MCF 10A (cell line): ENCODE measurements at regions of chr18 and their contacts with region 1.

Region 1: DNA sequence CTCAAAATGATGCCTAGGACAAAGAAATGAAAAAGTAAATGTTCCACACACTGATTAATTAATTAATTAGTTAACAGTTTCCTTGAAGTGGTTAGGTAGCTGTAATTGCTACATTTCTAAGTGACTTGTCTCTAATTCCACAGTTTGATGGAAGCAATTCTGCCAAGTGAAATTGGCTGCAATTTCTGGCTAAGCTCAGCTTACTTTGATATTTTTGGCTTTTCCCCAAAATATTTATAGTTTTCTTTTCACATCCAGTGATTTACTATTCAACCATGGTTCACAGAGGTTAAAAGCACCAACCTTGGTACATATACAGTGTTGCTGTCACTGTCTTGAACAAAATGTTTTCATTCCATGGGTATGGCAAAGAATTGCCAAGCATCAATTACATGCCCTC is 459.5 kb upstream of the CDH20 start:
- DNase-seq: no peak
- H3K4me3 Mint-ChIP-seq: no peak overlapping the region
- H3K27ac Mint-ChIP-seq: peak overlapping the region; percentile 29
- H3K4me1 Mint-ChIP-seq: peaks cover 26% of the 10 kb centered on the region
- H3K27me3 Mint-ChIP-seq: no peaks in the 10 kb centered on the region
- CTCF ChIP-seq: no peak

Region 2: DNA sequence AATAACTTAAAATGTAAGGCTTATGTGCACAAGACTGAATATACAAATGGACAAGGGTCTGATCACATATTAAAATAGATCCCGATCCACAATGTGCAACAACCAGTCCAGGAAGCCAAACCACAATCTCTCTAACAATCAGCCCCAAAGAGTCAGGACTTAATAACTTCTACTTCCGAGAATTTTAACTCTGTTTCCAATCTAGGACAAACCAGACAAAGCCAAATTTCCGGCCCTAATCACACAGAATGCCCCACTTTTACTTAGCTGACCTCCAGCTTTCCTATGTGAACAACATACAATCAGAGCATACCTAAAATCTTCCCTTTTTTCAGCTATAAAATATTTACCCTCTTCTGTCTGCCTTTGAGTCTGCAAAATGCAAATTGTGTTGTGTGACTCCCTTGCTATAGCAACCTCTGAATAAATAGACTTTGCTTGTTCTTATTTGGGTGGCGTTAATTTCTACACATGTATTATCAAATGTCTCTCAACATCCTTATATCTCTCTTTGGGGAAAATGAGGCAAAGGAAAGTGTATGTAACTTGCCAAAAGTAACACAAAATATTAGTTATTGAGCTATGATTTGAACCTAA is 119.2 kb before region 1 on chr18:
- CTCF ChIA-PET with region 1: no interaction called
- POLR2A ChIA-PET with region 1: no interaction called
- intact Hi-C with region 1: no loop called
- DNase-seq: no peak
- H3K4me3 Mint-ChIP-seq: no peak overlapping the region
- H3K27ac Mint-ChIP-seq: no peak overlapping the region
- H3K4me1 Mint-ChIP-seq: no peaks in the 10 kb centered on the region
- H3K27me3 Mint-ChIP-seq: peaks cover 83% of the 10 kb centered on the region
- CTCF ChIP-seq: no peak

Region 3: GRCh38 chr18:60861575-60861974 is 12.1 kb before region 1 on chr18:
- CTCF ChIA-PET with region 1: no interaction called
- POLR2A ChIA-PET with region 1: interaction called, 10 read pairs
- intact Hi-C with region 1: no loop called
- DNase-seq: peak; percentile 24
- H3K4me3 Mint-ChIP-seq: no peak overlapping the region
- H3K27ac Mint-ChIP-seq: no peak overlapping the region
- H3K4me1 Mint-ChIP-seq: peaks cover 12% of the 10 kb centered on the region
- H3K27me3 Mint-ChIP-seq: no peaks in the 10 kb centered on the region
- CTCF ChIP-seq: no peak

Region 4: DNA sequence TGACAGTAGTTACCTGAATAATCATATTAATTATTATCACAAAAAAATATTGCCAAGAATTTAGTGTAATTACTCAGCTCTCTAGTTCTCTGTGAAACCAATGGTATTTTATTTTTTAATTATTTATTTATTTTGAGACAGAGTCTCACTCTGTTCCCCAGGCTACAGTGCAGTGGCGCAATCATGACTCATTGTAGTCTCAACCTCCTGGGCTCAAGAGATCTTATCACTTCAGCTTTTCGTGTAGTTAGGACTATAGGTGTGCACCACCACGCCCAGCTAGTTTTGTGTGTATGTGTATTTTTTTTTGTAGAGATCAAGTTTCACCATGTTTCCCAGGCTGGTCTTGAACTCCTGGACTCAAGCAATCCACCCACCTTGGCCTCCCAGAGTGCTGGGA is 19.1 kb after region 1 on chr18:
- CTCF ChIA-PET with region 1: interaction called, 3 read pairs
- POLR2A ChIA-PET with region 1: interaction called, 15 read pairs
- intact Hi-C with region 1: no loop called
- DNase-seq: peak; percentile 97
- H3K4me3 Mint-ChIP-seq: peak overlapping the region; percentile 33
- H3K27ac Mint-ChIP-seq: peak overlapping the region; percentile 94
- H3K4me1 Mint-ChIP-seq: peaks cover 34% of the 10 kb centered on the region
- H3K27me3 Mint-ChIP-seq: no peaks in the 10 kb centered on the region
- CTCF ChIP-seq: no peak

Region 5: GRCh38 chr18:60943297-60943696 is 69.6 kb after region 1 on chr18:
- CTCF ChIA-PET with region 1: no interaction called
- POLR2A ChIA-PET with region 1: no interaction called
- intact Hi-C with region 1: no loop called
- DNase-seq: no peak
- H3K4me3 Mint-ChIP-seq: no peak overlapping the region
- H3K27ac Mint-ChIP-seq: no peak overlapping the region
- H3K4me1 Mint-ChIP-seq: no peaks in the 10 kb centered on the region
- H3K27me3 Mint-ChIP-seq: no peaks in the 10 kb centered on the region
- CTCF ChIP-seq: no peak